Right ventricle myocardium inferior (tissue), 1 donor: ENCODE measurements at regions of chr5 and their contacts with region 1.

Region 1: DNA sequence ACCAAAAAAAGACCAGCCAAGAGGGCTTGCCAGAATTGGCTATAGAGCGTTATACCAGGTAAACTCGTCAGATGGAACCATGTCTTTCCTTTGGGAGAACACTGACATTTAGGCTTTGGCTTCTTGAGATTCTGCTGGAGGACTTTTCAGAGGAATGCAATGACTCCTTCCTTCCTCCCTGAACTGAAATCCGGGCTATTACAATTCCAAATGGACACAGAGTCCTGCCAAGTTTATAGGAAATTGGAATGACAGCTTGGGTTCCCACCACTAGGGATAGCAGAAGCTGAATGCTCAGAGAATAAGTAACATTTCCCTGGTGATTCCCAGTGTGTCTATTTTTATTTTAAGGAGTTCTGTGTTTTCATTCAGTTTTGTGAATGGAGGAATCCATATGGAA is 143.0 kb downstream of the FGF1 start:
- DNase-seq: no peak
- ATAC-seq: peak; percentile 76

Region 2: GRCh38 chr5:142280066-142280911 is 262.6 kb before region 1 on chr5:
- intact Hi-C with region 1: loop called (anchors 2 kb)
- DNase-seq: peak; percentile 83
- ATAC-seq: peak; percentile 88

Region 3: GRCh38 chr5:142316051-142316450 is 226.9 kb before region 1 on chr5:
- intact Hi-C with region 1: loop called (anchors 2 kb)
- DNase-seq: no peak
- ATAC-seq: peak; percentile 49

Region 4: DNA sequence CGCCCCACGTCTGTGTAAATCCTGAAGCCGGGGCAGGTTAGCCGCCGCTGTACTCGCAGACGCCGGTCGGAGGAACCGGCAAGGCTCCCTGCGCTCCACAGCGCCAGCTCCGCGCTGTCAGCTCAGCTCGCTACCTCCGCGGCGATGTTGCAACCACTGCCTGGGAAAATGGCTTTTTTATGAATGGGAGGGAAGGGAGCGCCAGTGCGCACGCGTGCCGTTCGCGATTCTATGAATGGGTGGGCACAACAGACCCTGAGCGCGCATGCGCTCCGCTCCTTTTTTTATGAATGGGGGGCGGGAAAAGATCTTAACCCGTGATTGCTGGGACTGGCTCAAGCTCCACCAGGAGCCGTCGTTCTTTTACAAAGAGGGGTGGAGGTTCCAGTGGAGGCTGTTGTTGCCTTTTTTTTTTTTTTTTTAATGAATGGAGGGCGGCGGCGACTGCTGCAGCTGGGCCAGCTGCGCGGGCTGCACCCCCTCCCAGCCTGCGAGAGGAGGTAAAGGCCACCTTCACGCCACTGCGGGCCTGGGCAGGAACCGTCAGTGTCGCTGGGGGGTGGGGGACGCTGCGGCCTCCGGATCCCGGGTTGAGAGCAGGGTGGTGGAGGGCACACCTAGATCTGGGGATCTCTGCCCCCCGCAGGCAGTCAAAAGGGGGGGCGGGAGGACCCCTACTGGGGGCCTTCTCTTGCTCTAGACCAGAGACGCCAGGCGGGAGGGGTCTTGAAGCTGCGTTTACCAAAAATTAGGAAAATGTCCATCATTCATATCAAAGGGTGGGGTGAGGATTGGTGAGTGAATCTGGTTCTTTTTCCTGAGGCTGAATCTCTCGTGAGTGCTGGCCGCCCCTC is 217.8 kb before region 1 on chr5 and contains the start of gene SPRY4:
- intact Hi-C with region 1: loop called (anchors 2 kb)
- DNase-seq: peak; percentile 94
- ATAC-seq: peak; percentile 74
- total RNA-seq, gene SPRY4: 9.7 TPM

Region 5: GRCh38 chr5:142356716-142357473 is 186.0 kb before region 1 on chr5:
- intact Hi-C with region 1: loop called (anchors 1 kb)
- DNase-seq: peak; percentile 94
- ATAC-seq: peak; percentile 86

Region 6: GRCh38 chr5:142426129-142427014 is 116.5 kb before region 1 on chr5:
- intact Hi-C with region 1: loop called (anchors 2 kb)
- DNase-seq: peak; percentile 83
- ATAC-seq: peak; percentile 65

Region 7: GRCh38 chr5:142492781-142493281 is 50.1 kb before region 1 on chr5:
- intact Hi-C with region 1: loop called (anchors 2 kb)
- DNase-seq: no peak
- ATAC-seq: peak; percentile 48

Region 8: GRCh38 chr5:142597546-142598341 is 54.8 kb after region 1 on chr5:
- intact Hi-C with region 1: no loop called
- DNase-seq: no peak
- ATAC-seq: no peak